ENCODE measurements at regions of chr16 and their contacts with region 1.

Region 1: DNA sequence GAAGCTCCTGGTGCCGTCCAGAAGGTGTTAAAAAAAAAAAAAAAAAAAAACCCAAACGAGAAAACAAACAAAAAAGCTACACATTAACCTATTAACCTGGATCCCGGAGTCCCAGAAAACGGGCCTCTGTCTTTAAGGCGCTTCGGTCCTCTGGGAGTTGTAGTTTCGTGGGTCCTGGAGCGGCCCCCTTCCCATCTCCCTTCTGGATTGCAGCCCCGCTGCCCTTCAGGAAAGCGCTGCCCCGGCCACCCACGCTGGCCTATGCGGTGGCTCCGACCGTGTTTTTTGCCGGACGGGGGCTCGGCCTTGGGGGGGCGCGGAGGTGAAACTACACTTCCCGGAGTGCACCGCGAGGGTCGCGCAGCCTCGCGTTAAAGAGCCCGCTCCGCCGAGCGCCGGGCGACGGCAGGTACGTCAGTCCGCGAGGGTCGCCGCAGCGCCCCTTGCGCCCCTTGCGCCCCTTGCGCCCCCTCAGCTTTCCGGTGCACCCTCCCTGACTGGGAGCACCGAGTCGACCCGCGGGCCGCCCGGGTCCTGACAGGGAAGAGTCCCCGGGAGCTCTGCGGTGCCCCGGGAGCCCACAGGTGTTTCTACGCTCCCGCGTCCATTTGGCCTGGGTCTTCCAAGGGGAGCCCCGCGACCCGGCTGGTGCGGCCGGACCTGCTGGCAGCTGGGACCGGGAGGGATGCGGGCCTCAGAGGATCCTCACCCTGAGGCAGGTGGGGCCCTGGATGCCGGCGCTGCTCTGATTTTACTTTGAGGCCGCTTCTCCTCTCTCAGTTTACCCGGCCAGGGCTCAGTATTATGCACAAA is at the start of gene FCSK:
- DNase-seq: peak; percentile 62
- H3K4me3 Mint-ChIP-seq: peak within 1 kb of the TSS; percentile 86
- H3K27ac Mint-ChIP-seq: peak within 1 kb of the TSS; percentile 88
- H3K4me1 Mint-ChIP-seq: peaks cover 18% of the 10 kb centered on the region
- H3K27me3 Mint-ChIP-seq: no peaks in the 10 kb centered on the region
- total RNA-seq, gene FCSK: 12.2 to 12.6 TPM

Region 2: GRCh38 chr16:70395345-70395901 is 59.0 kb before region 1 on chr16:
- CTCF ChIA-PET with region 1: interaction called, 6 read pairs
- intact Hi-C with region 1: loop called (anchors 2 kb)
- DNase-seq: peak; percentile 80
- H3K4me3 Mint-ChIP-seq: no peak overlapping the region
- H3K27ac Mint-ChIP-seq: no peak overlapping the region
- H3K4me1 Mint-ChIP-seq: peaks cover 3% of the 10 kb centered on the region
- H3K27me3 Mint-ChIP-seq: no peaks in the 10 kb centered on the region

Region 3: GRCh38 chr16:70402916-70403659 is 51.3 kb before region 1 on chr16:
- CTCF ChIA-PET with region 1: no interaction called
- intact Hi-C with region 1: loop called (anchors 2 kb)
- DNase-seq: no peak
- H3K4me3 Mint-ChIP-seq: no peak overlapping the region
- H3K27ac Mint-ChIP-seq: peak overlapping the region; percentile 25
- H3K4me1 Mint-ChIP-seq: peaks cover 46% of the 10 kb centered on the region
- H3K27me3 Mint-ChIP-seq: no peaks in the 10 kb centered on the region

Region 4: DNA sequence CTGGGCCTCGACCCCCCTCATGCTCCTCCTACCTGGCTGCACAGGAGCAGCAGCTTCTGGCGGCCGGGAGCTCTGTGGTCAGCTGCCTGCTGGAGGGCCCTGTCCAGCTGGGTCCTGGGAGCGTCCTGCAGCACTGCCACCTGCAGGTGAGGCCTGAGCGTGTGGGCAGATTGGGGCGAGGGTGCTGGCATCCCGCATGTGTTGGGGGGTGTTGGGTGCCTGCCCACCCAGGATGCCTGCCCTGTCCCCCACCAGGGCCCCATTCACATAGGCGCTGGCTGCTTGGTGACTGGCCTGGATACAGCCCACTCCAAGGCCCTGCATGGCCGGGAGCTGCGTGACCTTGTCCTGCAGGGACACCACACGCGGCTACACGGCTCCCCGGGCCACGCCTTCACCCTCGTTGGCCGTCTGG is 16.5 kb after region 1 on chr16:
- CTCF ChIA-PET with region 1: interaction called, 5 read pairs
- intact Hi-C with region 1: loop called (anchors 1 kb)
- DNase-seq: no peak
- H3K4me3 Mint-ChIP-seq: no peak overlapping the region
- H3K27ac Mint-ChIP-seq: no peak overlapping the region
- H3K4me1 Mint-ChIP-seq: no peaks in the 10 kb centered on the region
- H3K27me3 Mint-ChIP-seq: no peaks in the 10 kb centered on the region

Measured in activated naive CD4-positive, alpha-beta T cell treated with anti-CD3 and anti-CD28 coated beads for 36 hours (primary cell).